ENCODE measurements at regions of chr17 and their contacts with region 1.

Region 1: GRCh38 chr17:45148183-45149036 is at the start of gene HEXIM1:
- DNase-seq: peak; percentile 99 to 100
- ATAC-seq: peak; percentile 74 to 86
- H3K4me3 ChIP-seq: peak within 1 kb of the TSS; percentile 74
- H3K27ac ChIP-seq: peak within 1 kb of the TSS; percentile 97 to 98
- H3K4me1 ChIP-seq: peaks cover 27% of the 10 kb centered on the region
- CTCF ChIP-seq: no peak
- EP300 ChIP-seq: no peak
- POLR2A ChIP-seq: peak; percentile 100
- RAD21 ChIP-seq: peak in 1 of 2 experiments; percentile 7; a peak in 1 of 5 replicates
- polyA plus RNA-seq, gene HEXIM1: 39.3 and 54.0 TPM in 2 replicates

Region 2: GRCh38 chr17:45098869-45099616 is 49.4 kb before region 1 on chr17:
- CTCF ChIA-PET with region 1: interaction called, 15 read pairs
- POLR2A ChIA-PET with region 1: interaction called, 6 read pairs
- DNase-seq: peak; percentile 85 to 99
- ATAC-seq: peak; percentile 87 to 92
- H3K4me3 ChIP-seq: no peak overlapping the region
- H3K27ac ChIP-seq: no peak overlapping the region
- H3K4me1 ChIP-seq: peaks cover 11% of the 10 kb centered on the region
- CTCF ChIP-seq: peak; percentile 98
- EP300 ChIP-seq: no peak
- POLR2A ChIP-seq: no peak
- RAD21 ChIP-seq: peak; percentile 84 to 87

Region 3: DNA sequence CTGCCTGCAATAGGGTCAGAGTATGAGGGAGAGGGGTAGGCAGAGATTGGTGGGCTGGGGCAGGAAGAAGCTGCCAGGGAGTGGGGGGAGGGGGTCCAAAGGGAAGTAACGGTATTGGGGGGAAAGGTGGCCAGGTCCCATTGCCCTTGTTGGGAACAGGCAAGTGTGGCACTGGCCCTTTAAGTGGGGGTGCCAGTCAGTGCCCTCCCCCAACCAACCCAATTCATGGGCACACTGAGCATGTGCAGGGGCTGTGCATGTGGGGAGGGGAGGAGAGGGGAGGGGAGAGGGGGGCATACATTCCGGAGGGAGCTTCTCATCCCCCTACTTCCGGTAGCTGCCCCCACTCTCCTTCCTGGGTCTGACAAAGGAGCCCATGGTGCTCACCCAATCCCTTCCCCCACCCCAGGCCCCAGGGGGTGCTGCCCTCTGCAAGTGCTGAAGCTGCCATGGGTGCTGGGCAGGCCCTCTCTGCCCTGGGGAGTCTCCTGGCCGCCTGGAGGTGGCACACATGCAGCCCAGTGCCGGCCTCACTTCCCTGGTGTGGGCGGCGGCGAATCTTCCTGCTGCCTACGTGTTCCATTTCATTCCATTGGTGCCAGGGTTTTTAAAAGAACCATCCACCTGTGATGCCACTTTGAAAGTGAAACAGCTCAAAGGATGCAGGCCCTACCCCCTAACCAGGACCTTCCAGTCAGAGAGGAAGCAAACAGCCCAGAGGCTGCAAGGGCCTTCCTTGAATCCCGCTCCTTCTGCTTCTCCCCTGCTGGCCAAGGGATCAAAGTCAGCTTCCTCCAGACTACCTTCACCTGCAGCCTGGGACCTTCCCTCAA is 24.3 kb after region 1 on chr17:
- CTCF ChIA-PET with region 1: interaction called, 540 read pairs
- POLR2A ChIA-PET with region 1: interaction called, 371 read pairs
- DNase-seq: peak; percentile 90 to 99
- ATAC-seq: peak; percentile 73 to 79
- H3K4me3 ChIP-seq: peak overlapping the region; percentile 36
- H3K27ac ChIP-seq: peak overlapping the region; percentile 96 to 100
- H3K4me1 ChIP-seq: peaks cover 79% of the 10 kb centered on the region
- CTCF ChIP-seq: 0 out of 3 replicates have a peak, but pooled peaks have one; percentile 24
- EP300 ChIP-seq: peak; percentile 86 to 95
- POLR2A ChIP-seq: peak; percentile 46
- RAD21 ChIP-seq: peak; percentile 36 to 75

Region 4: GRCh38 chr17:45218895-45219661 is 70.7 kb after region 1 on chr17:
- CTCF ChIA-PET with region 1: interaction called, 2,147 read pairs
- POLR2A ChIA-PET with region 1: interaction called, 20 read pairs
- DNase-seq: peak; percentile 85 to 87
- ATAC-seq: peak; percentile 61 to 82
- H3K4me3 ChIP-seq: no peak overlapping the region
- H3K27ac ChIP-seq: peak overlapping the region; percentile 97
- H3K4me1 ChIP-seq: peaks cover 37% of the 10 kb centered on the region
- CTCF ChIP-seq: peak; percentile 99
- EP300 ChIP-seq: no peak
- POLR2A ChIP-seq: no peak
- RAD21 ChIP-seq: peak; percentile 99 to 100

Region 5: DNA sequence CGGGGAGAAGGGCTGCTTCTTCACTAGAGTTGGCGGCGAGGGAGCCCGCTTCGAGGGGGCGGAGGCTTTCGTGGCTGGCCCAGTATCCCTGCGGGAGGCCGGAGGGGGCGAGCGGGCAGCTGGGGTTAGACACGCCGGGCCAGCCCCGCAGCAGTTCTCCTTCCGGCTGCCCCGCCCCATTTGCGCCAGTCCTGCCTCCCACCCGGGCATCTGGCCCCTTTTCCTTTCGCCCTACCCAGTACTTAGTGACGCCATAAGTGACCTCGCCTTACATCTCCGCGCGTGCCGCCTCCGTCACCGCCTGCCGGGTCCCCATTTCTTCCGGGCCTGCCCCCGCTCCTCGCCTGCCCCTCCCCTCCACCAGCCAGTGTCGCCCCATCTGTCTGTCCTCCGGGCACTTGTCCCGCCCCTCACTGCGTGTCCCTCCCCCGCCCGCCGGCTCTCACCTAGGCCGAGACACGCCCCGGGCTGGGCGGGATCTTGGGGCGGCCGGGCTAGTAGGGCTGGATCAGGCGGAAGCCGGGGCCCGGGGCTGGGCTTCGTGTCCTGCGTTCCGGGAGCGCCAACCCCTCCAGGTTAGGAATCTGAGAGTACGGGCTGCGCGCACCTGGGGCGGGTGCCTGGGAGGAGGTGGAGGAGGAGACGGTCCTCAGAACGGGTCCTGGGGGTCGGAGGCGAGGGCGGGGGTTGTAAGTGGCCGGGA is 99.2 kb after region 1 on chr17:
- CTCF ChIA-PET with region 1: interaction called, 5 read pairs
- POLR2A ChIA-PET with region 1: interaction called, 13 read pairs
- DNase-seq: peak; percentile 99 to 100
- ATAC-seq: peak; percentile 79 to 91
- H3K4me3 ChIP-seq: peak overlapping the region; percentile 89
- H3K27ac ChIP-seq: peak overlapping the region; percentile 93 to 96
- H3K4me1 ChIP-seq: peaks cover 49% of the 10 kb centered on the region
- CTCF ChIP-seq: no peak
- EP300 ChIP-seq: peak; percentile 78 to 91; a peak in 3 of 5 replicates
- POLR2A ChIP-seq: peak; percentile 70
- RAD21 ChIP-seq: no peak; a peak in 1 of 5 replicates

Region 6: GRCh38 chr17:45405250-45406086 is 257.1 kb after region 1 on chr17:
- CTCF ChIA-PET with region 1: no interaction called
- POLR2A ChIA-PET with region 1: no interaction called
- DNase-seq: peak in 1 of 2 experiments; percentile 42
- ATAC-seq: peak in 1 of 2 experiments; percentile 57; a peak in 3 of 6 replicates
- H3K4me3 ChIP-seq: no peak overlapping the region
- H3K27ac ChIP-seq: peak overlapping the region in 1 of 2 experiments; percentile 10; a peak in 1 of 6 replicates
- H3K4me1 ChIP-seq: peaks cover 37% of the 10 kb centered on the region
- CTCF ChIP-seq: no peak
- EP300 ChIP-seq: no peak
- POLR2A ChIP-seq: no peak
- RAD21 ChIP-seq: no peak